Activated T-helper 1 cell treated with anti-CD3 and anti-CD28 coated beads, Interleukin-12 subunit alpha, Interleukin-12 subunit beta, Interleukin-2, Interleukin-4 antibody, amounts not matched to agents 30 ng/mL and 10 ng/mL and 1 ng/mL, durations not matched to agents 14 hours and 24 hours and 36 hours (primary cell): ENCODE measurements at regions of chr15 and their contacts with region 1.

Region 1: GRCh38 chr15:67542420-67543347 is at the start of gene MAP2K5:
- DNase-seq: peak; percentile 82
- H3K4me3 Mint-ChIP-seq: peak within 1 kb of the TSS; percentile 98
- H3K27ac Mint-ChIP-seq: peak within 1 kb of the TSS; percentile 96
- H3K4me1 Mint-ChIP-seq: peaks cover 43% of the 10 kb centered on the region
- H3K27me3 Mint-ChIP-seq: no peaks in the 10 kb centered on the region
- total RNA-seq, gene MAP2K5: 22.1 and 27.5 TPM in 2 replicates

Region 2: GRCh38 chr15:67456677-67457529 is 85.8 kb before region 1 on chr15:
- intact Hi-C with region 1: loop called (anchors 1 kb)
- DNase-seq: peak; percentile 67
- H3K4me3 Mint-ChIP-seq: no peak overlapping the region
- H3K27ac Mint-ChIP-seq: no peak overlapping the region
- H3K4me1 Mint-ChIP-seq: no peaks in the 10 kb centered on the region
- H3K27me3 Mint-ChIP-seq: peaks cover 11% of the 10 kb centered on the region

Region 3: DNA sequence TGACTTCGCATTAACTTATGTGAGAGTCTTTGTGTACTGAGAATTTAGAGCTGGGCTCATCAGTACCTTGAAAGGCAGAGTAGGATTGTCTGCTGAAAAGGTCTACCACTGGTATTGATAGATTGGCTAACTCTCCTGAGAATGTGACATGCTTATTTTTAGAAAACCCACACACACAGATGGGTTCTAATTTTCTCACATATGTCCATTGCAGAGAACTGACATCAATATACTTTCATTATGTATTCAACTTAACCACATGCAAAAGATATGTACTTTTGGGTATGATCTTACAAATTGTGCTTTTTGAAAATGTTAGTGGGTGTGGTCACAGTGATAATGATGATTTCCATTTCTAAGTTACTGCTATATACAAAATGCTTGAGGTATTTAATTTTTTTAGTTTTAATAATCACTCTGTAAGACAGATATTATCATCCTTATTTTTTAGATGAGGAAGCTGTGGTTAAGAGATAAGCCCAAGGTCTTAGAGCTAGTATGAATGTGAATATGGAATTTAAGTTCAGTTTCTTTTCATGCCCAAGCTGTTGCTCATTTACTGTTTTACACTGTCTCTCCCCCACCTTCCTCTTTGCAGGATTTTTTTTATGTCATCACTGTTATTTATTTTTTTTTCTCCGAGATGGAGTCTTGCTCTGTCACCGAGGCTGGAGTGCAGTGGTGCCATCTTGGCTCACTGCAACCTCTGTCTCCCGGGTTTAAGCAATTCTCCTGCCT is 22.1 kb after region 1 on chr15:
- intact Hi-C with region 1: loop called (anchors 2 kb)
- DNase-seq: no peak
- H3K4me3 Mint-ChIP-seq: no peak overlapping the region
- H3K27ac Mint-ChIP-seq: no peak overlapping the region
- H3K4me1 Mint-ChIP-seq: peaks cover 10% of the 10 kb centered on the region
- H3K27me3 Mint-ChIP-seq: no peaks in the 10 kb centered on the region

Region 4: GRCh38 chr15:67762610-67763368 is 220.1 kb after region 1 on chr15:
- intact Hi-C with region 1: loop called (anchors 5 kb)
- DNase-seq: peak; percentile 37
- H3K4me3 Mint-ChIP-seq: peak overlapping the region; percentile 24
- H3K27ac Mint-ChIP-seq: peak overlapping the region; percentile 41
- H3K4me1 Mint-ChIP-seq: peaks cover 46% of the 10 kb centered on the region
- H3K27me3 Mint-ChIP-seq: peaks cover 20% of the 10 kb centered on the region